GM10248 (cell line): ENCODE measurements at regions of chr12 and their contacts with region 1.

Region 1: DNA sequence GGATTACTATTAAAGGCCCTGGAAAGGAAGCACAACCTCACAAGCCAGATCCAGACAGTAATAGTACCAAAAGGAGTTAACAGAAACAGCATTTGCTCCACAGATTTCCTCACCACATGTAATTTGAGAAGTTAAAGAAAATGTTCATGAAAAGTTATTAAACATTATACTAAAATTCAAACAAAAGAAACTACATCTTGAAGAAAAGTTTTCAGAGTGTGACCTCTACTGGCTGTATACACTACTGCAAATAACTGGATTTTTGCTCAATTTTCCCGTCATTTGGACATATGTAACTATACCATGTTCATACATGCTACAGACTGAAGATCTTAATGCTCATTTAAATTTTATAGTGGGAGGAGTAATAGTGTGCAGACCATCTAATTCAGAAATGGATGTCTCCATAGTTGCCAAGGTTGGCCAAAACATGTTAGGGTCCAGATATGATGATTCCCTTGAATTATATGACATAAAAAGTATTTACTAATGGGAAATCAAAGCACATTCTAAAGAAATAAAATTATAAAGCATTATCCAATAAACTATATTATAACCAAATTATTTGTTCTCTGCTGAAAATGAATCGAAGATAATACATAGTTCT is 5.6 kb downstream of the KRR1 start:
- DNase-seq: no peak
- CTCF ChIP-seq: peak; percentile 60

Region 2: GRCh38 chr12:75480469-75480949 is 25.3 kb before region 1 on chr12 and contains the start of gene GLIPR1:
- CTCF ChIA-PET with region 1: interaction called, 30 read pairs
- POLR2A ChIA-PET with region 1: no interaction called
- DNase-seq: peak; percentile 69
- CTCF ChIP-seq: no peak

Region 3: DNA sequence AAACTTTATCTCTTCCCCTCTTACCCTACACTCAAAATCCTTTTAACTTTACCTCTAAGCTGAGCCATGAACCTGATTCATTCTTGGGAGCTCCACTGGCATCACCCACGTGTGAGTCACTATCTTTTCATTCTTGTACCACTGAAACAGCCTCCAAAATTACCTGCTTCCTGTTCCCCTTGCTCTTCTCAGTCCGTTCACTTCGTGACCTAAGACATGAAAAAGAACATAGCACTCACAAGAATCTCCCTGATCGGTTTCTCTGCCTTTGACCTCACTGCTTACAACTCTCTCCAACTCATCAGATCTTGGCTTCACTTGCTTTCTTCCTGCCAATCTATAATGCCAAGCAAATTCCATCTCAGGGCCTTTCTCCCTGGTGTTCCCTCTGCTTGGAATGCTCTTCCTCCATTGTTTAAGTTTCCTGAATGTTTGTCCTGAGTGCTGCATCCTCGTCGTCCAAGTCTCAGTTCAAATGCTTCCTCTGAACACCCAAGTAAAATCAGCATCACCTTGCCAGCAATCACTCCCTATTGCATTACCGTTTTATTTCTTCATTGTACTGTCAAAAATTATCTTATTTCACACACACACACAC is 16.1 kb before region 1 on chr12:
- CTCF ChIA-PET with region 1: interaction called, 30 read pairs
- POLR2A ChIA-PET with region 1: interaction called, 4 read pairs
- DNase-seq: no peak
- CTCF ChIP-seq: no peak